Stomach (tissue), 19 donors: ENCODE measurements at regions of chr12 and their contacts with region 1.

Region 1: DNA sequence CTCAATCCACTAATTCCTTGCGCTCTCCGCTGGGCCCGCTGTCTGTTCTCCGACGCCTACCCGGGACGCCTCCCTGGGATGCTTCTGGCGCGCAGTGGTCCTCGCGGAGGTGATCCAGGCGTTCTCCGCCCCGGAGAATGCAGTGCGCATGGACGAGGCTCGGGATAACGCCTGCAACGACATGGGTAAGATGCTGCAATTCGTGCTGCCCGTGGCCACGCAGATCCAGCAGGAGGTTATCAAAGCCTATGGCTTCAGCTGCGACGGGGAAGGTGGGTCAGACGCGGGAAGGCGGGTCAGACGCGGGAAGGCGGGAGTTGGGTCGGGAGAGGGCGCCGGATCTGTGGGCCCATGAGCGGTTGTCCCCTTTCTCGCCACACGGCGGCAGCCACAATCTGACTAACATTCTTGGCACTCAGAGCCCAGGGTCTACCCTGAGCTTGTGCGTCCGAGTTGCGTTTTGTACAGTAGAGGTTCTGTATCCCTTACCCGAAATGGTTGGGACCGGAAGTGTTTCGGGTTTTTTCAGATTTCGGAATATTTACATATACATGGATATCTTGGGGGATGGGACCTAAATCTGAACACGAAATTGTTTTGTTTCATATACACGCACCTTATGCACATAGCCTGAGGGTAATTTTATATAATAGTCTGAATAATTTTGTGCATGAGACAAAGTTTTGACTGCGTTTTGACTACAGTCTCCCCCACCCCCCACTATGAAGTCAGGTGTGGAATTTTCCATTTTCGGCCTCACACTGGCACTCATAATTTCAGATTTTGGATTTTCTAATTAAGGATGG is 762 bp downstream of the C12orf57 start:
- DNase-seq: peak; percentile 95 to 97
- H3K4me3 ChIP-seq: peak overlapping the region; percentile 56 to 68 (median 62)
- H3K27ac ChIP-seq: peak overlapping the region; percentile 91 to 99 (median 97)
- H3K4me1 ChIP-seq: peaks cover 27 to 82% (median 56%) of the 10 kb centered on the region in 4 donors
- H3K27me3 ChIP-seq: no peaks in the 10 kb centered on the region
- CTCF ChIP-seq: peak in 6 of 7 experiments; percentile 80 to 96 (median 88)
- EP300 ChIP-seq: no peak
- POLR2A ChIP-seq: peak in 1 of 4 donors; percentile 52

Region 2: DNA sequence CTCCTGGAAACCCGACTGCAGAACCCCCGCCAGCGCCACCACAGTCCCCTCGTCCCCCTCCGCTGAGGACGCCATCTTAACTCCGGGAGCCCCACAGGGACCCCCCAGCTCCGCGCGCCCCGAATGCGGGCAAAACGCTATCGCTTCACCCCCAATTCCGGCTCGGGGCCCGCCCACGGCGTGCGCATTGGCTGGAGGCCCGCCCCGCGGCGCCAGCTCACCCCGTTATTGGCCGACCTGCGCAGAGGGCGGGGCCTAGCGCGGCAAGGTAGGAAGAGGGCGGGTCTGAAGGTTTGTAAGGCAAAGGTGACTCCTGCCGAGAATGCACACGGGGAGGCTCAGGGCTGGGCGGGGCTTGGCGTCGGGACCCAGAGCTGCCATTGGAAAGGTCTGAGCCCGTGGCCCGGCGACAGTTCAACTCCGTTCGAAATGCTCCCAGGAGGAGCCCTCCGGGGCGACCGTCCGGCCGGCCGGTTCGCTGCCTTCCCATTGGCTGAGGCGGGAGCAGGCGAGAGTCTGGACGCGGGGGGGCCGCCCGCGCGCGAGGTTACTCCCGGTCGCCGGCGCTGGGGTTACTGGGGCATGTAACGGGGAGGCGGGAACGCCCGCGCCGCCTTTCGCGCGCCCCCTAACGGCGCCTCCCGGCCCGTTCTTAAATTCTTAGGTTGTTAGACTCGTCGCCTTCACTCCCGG is 73.9 kb after region 1 on chr12 and contains the start of gene LPCAT3:
- intact Hi-C with region 1: no loop called
- DNase-seq: peak; percentile 98
- H3K4me3 ChIP-seq: peak within 1 kb of the TSS; percentile 74 to 83 (median 79)
- H3K27ac ChIP-seq: peak within 1 kb of the TSS; percentile 95 to 98 (median 96)
- H3K4me1 ChIP-seq: peaks cover 7 to 50% (median 45%) of the 10 kb centered on the region in 4 donors
- H3K27me3 ChIP-seq: no peaks in the 10 kb centered on the region
- CTCF ChIP-seq: peak in 4 of 7 experiments; percentile 77 to 91 (median 86)
- EP300 ChIP-seq: no peak
- POLR2A ChIP-seq: peak in 1 of 4 donors; percentile 81
- total RNA-seq, gene LPCAT3: 40.3 to 116 (median 57.4) TPM

Region 3: DNA sequence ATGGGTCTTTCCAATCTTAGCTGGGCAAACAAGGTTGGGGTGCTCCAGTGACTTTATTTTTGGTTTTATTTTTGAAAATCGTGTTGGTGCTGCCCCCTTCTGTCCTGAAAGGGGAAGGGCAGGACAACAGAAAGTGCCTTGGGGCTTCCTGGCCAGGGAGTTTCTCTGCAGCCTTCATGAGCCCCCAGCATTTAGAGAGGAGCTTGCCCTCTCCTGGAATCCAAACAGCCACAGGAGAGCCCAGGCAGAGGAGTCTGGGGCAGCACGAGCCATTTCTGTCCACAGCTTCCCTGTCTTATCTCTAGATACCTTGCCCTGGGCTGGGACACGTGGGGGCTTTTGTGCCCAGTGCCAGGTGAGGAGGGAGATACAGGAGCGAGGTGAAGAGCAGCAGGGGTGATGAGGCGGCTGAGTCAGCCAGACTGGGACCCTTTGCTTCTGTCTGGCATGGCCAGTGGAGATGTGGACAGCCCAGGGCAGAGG is 168.8 kb after region 1 on chr12:
- intact Hi-C with region 1: loop called (anchors 10 kb)
- DNase-seq: peak in 1 of 2 donors; percentile 72
- H3K4me3 ChIP-seq: peak overlapping the region in 1 of 4 donors; percentile 6
- H3K27ac ChIP-seq: peak overlapping the region in 3 of 5 donors; percentile 3 to 39 (median 15)
- H3K4me1 ChIP-seq: peaks cover 6 to 40% (median 14%) of the 10 kb centered on the region in 4 donors
- H3K27me3 ChIP-seq: no peaks in the 10 kb centered on the region
- CTCF ChIP-seq: peak in 5 of 7 experiments; percentile 58 to 93 (median 86)
- EP300 ChIP-seq: no peak
- POLR2A ChIP-seq: no peak